ENCODE measurements at regions of chr6 and their contacts with region 1.

Region 1: DNA sequence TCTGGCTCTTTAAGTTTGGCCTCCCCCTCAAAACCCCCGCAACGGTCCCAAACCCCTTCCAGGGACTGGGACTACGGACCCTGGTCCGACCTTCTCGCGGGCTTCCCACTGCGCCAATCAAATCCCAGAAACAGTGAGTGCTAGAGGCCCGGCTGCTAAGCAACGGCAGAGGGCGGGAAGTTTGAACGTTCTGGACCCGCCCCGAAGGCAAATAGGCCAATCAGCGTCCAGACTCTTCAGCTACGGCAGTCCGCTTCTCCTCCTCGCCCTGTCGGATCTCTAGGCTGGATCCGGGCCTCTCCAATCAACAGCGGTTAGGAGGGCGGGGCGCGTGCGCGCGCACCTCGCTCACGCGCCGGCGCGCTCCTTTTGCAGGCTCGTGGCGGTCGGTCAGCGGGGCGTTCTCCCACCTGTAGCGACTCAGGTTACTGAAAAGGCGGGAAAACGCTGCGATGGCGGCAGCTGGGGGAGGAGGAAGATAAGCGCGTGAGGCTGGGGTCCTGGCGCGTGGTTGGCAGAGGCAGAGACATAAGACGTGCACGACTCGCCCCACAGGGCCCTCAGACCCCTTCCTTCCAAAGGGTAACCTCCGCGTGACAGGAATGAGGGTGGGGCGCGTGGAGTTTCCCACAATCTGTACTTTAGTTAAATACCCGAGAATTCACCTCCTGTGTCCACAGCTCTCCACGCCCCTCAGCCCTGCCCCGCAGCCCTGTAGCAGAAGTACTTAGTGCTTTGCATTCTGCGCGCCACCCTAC is at the start of gene MSH5:
- DNase-seq: peak; percentile 96 to 98 (median 98)
- H3K4me3 ChIP-seq: peak within 1 kb of the TSS; percentile 56
- H3K27ac ChIP-seq: peak within 1 kb of the TSS in 1 of 2 donors; percentile 47
- H3K4me1 ChIP-seq: peaks cover 7% of the 10 kb centered on the region
- H3K27me3 ChIP-seq: no peaks in the 10 kb centered on the region
- CTCF ChIP-seq: no peak
- EP300 ChIP-seq: no peak
- POLR2A ChIP-seq: peak; percentile 45
- total RNA-seq, gene MSH5: 8.6 to 19.1 (median 14.5) TPM

Region 2: DNA sequence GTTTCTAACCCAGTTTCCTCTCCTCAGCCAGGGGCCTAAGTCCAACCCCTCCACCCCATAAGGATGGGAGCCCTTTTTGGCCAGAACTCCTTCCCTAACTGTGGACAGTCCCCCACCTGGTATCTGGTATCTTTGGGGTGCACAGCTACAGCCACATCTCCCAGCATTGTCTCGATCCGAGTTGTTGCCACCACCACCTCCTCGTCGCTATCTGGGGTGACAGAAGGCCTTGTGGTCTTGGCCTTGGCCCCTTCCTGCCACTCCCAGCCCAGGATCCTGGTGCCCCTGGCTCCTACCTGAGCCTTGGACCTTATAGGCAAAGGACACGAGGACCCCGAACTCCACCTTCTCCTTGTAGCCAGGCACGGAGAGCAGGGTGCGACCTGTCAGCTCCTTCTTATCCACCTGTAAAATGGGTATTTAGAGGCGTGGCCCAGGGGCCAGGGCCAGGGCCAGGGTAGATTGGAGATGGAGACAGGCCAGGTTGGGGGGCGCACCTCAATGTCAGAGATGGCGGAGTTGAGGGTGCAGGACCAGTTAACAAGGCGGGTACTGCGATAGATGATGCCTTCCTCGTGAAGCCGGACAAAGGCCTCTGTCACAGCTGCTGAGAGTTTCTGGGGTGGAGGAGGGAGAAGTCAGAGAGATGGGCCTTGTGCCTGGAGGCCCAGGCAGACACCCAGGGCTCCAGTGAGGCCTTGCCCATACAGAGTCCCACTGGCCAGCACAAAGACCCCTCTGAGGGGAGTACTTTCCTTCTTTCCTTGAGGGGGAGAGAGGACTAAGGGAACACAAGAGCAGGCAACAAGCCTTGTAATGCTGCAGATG is 44.5 kb after region 1 on chr6:
- intact Hi-C with region 1: loop called in 1 of 4 experiments (anchors 5 kb)
- DNase-seq: no peak
- H3K4me3 ChIP-seq: no peak overlapping the region
- H3K27ac ChIP-seq: no peak overlapping the region
- H3K4me1 ChIP-seq: no peaks in the 10 kb centered on the region
- H3K27me3 ChIP-seq: no peaks in the 10 kb centered on the region
- CTCF ChIP-seq: no peak
- EP300 ChIP-seq: no peak
- POLR2A ChIP-seq: no peak

Region 3: GRCh38 chr6:31795616-31796298 is 55.9 kb after region 1 on chr6 and contains the start of gene VARS1:
- intact Hi-C with region 1: loop called in 1 of 4 experiments (anchors 10 kb)
- DNase-seq: peak; percentile 88 to 93 (median 91)
- H3K4me3 ChIP-seq: peak within 1 kb of the TSS; percentile 67
- H3K27ac ChIP-seq: peak within 1 kb of the TSS; percentile 93 to 96
- H3K4me1 ChIP-seq: peaks cover 6% of the 10 kb centered on the region
- H3K27me3 ChIP-seq: no peaks in the 10 kb centered on the region
- CTCF ChIP-seq: peak; percentile 77 to 99 (median 99)
- EP300 ChIP-seq: no peak
- POLR2A ChIP-seq: peak; percentile 70
- total RNA-seq, gene VARS1: 16.0 to 73.6 (median 44.1) TPM